SK-N-SH (cell line): ENCODE measurements at regions of chr14 and their contacts with region 1.

Region 1: GRCh38 chr14:68788996-68789820 is 3.7 kb downstream of the ZFP36L1 start:
- DNase-seq: peak; percentile 95
- H3K4me3 ChIP-seq: peak overlapping the region in 1 of 2 experiments; percentile 52; a peak in 2 of 4 replicates
- H3K27ac ChIP-seq: peak overlapping the region; percentile 58 to 64
- H3K4me1 ChIP-seq: peaks cover 4 to 17% of the 10 kb centered on the region in 2 experiments
- H3K27me3 ChIP-seq: no peaks in the 10 kb centered on the region
- CTCF ChIP-seq: peak; percentile 79
- EP300 ChIP-seq: no peak
- RAD21 ChIP-seq: peak; percentile 95

Region 2: DNA sequence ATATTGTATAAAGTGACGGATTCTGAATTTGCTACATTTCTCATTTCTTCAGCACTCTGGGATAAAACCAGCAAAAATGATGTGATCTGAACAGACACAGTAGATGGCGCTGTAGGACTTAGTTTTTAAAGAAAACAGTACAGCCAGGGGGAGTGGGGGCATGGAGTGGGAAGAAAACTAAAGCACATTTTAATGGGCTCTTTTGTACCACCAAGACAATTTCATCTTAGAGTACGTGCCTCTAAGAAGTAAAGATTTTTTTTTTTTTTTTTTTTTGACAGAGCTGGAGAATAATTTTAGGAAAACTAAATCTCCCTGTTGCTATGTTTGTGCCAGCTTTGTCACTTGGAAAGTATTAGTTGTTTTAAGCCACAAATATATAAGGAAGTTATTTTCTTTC is 845.3 kb before region 1 on chr14:
- CTCF ChIA-PET with region 1: interaction called, 16 read pairs
- POLR2A ChIA-PET with region 1: no interaction called
- DNase-seq: peak; percentile 57
- H3K4me3 ChIP-seq: no peak overlapping the region
- H3K27ac ChIP-seq: peak overlapping the region; percentile 54 to 83; a peak in 3 of 4 replicates
- H3K4me1 ChIP-seq: peaks cover 0 to 28% of the 10 kb centered on the region in 2 experiments; a peak in 3 of 4 replicates
- H3K27me3 ChIP-seq: no peaks in the 10 kb centered on the region
- CTCF ChIP-seq: peak; percentile 82
- EP300 ChIP-seq: peak in 1 of 2 experiments; percentile 42; a peak in 1 of 4 replicates
- RAD21 ChIP-seq: peak; percentile 92

Region 3: DNA sequence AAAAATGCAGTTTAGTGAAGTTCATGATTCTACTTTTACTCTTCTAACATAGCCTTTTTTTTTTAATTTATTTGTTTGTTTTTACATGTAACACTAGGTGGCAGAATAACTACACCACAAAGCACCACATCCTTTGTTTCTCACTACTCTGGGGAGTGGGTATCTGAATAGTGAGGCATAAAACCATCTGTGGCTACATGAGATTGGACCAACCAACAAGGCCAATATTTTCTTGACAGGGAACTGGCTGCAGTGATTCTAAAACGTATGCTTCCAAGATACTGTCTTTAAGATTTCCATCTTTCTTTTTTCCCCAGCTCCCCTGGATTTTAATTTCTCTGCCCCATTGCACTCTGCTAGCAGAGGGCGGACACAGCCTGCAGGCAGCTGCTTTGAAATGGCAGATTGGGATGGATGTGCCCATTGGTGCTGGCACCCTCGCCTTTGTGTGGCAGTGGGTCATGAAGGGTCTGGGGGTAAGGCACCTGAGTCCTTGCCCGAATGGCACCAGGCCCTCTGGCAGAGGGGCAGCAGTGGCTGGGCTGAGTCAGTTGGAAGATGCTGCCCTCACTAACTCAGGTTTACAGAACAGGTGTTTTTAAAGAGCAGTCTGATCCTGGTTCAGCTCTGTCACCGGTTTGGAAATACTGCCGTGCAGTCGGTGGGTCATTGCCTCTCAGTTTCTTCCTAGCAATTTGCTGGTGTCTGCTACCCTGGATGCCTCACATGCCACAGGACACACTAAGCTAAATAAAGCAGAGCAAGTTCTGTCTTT is 540.5 kb before region 1 on chr14:
- CTCF ChIA-PET with region 1: interaction called, 160 read pairs
- POLR2A ChIA-PET with region 1: no interaction called
- DNase-seq: peak; percentile 64
- H3K4me3 ChIP-seq: no peak overlapping the region
- H3K27ac ChIP-seq: peak overlapping the region; percentile 92 to 93
- H3K4me1 ChIP-seq: peaks cover 11 to 66% of the 10 kb centered on the region in 2 experiments
- H3K27me3 ChIP-seq: no peaks in the 10 kb centered on the region
- CTCF ChIP-seq: peak; percentile 75
- EP300 ChIP-seq: peak in 1 of 2 experiments; percentile 38; a peak in 1 of 4 replicates
- RAD21 ChIP-seq: peak; percentile 98

Region 4: GRCh38 chr14:68589447-68590220 is 199.6 kb before region 1 on chr14:
- CTCF ChIA-PET with region 1: interaction called, 12 read pairs
- POLR2A ChIA-PET with region 1: no interaction called
- DNase-seq: peak; percentile 52
- H3K4me3 ChIP-seq: no peak overlapping the region
- H3K27ac ChIP-seq: peak overlapping the region; percentile 78 to 94
- H3K4me1 ChIP-seq: peaks cover 47 to 54% of the 10 kb centered on the region in 2 experiments
- H3K27me3 ChIP-seq: no peaks in the 10 kb centered on the region
- CTCF ChIP-seq: no peak
- EP300 ChIP-seq: peak; percentile 48 to 87; a peak in 3 of 4 replicates
- RAD21 ChIP-seq: peak; percentile 38

Region 5: DNA sequence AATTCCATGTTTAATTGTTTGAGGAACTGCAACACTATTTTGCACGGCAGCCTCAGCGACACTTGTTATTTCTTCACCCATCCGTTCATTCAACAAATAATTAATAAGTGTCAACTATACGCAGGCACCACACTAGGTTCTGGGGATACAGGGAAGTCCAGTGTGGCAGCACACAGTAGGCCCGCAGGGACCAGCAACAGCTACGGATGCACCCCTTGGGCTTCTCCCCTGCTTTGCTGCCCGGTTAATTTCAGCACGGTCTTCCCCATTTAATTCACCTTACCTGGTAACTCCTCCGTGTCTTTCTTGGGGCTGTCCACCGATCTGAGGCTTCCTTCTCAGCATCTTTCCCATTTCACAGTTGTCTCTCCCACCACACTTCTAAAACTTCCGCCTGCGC is 44.6 kb before region 1 on chr14:
- CTCF ChIA-PET with region 1: no interaction called
- POLR2A ChIA-PET with region 1: no interaction called
- DNase-seq: no peak
- H3K4me3 ChIP-seq: no peak overlapping the region
- H3K27ac ChIP-seq: no peak overlapping the region
- H3K4me1 ChIP-seq: no peaks in the 10 kb centered on the region; a peak in 1 of 4 replicates
- H3K27me3 ChIP-seq: no peaks in the 10 kb centered on the region
- CTCF ChIP-seq: no peak
- EP300 ChIP-seq: no peak
- RAD21 ChIP-seq: no peak

Region 6: DNA sequence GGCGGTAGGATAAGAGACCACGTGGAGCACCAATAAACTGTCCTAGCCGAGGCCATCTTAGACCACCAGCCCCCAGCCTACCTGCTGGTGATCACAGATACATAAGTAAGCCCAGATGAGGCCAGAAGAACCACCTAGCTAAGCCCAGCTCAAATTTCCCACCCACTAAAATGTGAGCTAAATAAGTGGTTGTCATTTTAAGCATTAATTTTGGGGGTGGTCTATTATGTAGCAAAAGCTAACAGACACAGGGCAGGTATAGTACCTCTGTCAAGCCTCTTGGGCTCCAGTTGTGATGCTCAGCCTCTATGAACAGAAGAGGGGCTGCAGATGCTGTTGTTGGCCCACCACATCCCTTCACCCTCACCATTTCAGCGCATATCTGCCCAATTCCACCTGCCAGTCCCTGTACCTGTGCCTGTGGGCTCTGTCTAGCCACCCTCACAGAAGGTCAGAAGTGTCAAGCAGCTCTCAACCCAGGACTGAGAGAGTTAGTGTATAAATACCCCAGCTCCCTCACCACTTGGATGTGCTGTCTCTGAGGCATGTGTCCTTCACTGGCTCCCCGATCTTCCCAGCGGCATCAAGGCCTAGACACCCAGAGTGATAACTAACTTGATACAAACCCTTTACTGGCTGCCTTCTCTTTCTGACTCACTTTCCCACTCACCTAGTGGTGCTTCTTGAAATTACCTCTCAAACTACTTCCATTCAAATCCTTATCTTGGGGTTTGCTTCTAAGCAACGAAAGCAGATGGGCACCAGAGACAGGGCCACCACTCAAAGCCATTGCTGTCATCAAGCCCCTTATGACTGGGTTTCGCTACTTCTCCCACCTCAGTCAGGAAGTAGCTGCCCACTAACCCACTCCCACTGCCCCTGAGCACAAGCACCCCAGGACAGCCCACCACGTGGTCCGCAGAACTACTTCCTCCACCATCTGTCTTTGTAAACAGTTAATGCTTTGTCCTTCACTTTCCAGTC is 13.8 kb before region 1 on chr14:
- CTCF ChIA-PET with region 1: interaction called, 21 read pairs
- POLR2A ChIA-PET with region 1: no interaction called
- DNase-seq: no peak
- H3K4me3 ChIP-seq: no peak overlapping the region
- H3K27ac ChIP-seq: peak overlapping the region in 1 of 2 experiments; percentile 89; a peak in 2 of 4 replicates
- H3K4me1 ChIP-seq: peaks cover 2 to 10% of the 10 kb centered on the region in 2 experiments; a peak in 3 of 4 replicates
- H3K27me3 ChIP-seq: no peaks in the 10 kb centered on the region
- CTCF ChIP-seq: peak; percentile 19; the same call in 1 of the 2 replicates
- EP300 ChIP-seq: no peak
- RAD21 ChIP-seq: no peak

Region 7: GRCh38 chr14:68843471-68844209 is 54.4 kb after region 1 on chr14:
- CTCF ChIA-PET with region 1: interaction called, 13 read pairs
- POLR2A ChIA-PET with region 1: no interaction called
- DNase-seq: peak; percentile 77
- H3K4me3 ChIP-seq: peak overlapping the region in 1 of 2 experiments; percentile 23; a peak in 2 of 4 replicates
- H3K27ac ChIP-seq: no peak overlapping the region
- H3K4me1 ChIP-seq: peaks cover 0 to 4% of the 10 kb centered on the region in 2 experiments; a peak in 2 of 4 replicates
- H3K27me3 ChIP-seq: no peaks in the 10 kb centered on the region
- CTCF ChIP-seq: peak; percentile 94
- EP300 ChIP-seq: no peak
- RAD21 ChIP-seq: peak; percentile 71

Region 8: DNA sequence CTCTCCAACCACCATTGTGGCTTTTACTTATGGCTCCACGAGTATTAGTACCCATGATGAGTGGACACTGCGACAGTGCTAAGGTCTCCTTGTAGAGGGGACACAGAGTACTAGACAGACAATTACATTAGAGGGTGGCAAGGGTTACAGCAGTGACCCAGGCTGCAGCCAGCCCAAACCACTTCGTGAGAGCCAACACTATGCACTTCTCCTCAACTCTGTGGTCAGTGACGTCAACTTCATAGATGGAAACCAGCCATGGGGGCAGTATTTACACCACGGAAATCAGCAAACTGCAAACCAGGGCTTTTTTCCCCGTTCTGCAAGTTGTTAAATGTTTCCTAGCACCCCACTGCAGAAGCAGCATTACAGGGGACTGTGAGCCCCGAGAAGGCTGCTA is 65.2 kb after region 1 on chr14:
- CTCF ChIA-PET with region 1: no interaction called
- POLR2A ChIA-PET with region 1: no interaction called
- DNase-seq: no peak
- H3K4me3 ChIP-seq: no peak overlapping the region
- H3K27ac ChIP-seq: no peak overlapping the region
- H3K4me1 ChIP-seq: peaks cover 0 to 12% of the 10 kb centered on the region in 2 experiments; a peak in 1 of 4 replicates
- H3K27me3 ChIP-seq: no peaks in the 10 kb centered on the region
- CTCF ChIP-seq: no peak
- EP300 ChIP-seq: no peak
- RAD21 ChIP-seq: no peak